Naive thymus-derived CD4-positive, alpha-beta T cell (primary cell): ENCODE measurements at regions of chr5 and their contacts with region 1.

Region 1: GRCh38 chr5:16616536-16617273 is at the start of gene RETREG1:
- DNase-seq: peak; percentile 84 to 92 (median 91)
- ATAC-seq: peak; percentile 93
- H3K4me3 ChIP-seq: peak within 1 kb of the TSS; percentile 79
- H3K4me3 Mint-ChIP-seq: peak within 1 kb of the TSS in 6 of 10 donors; percentile 96 to 99 (median 98)
- H3K27ac ChIP-seq: peak within 1 kb of the TSS; percentile 98
- H3K27ac Mint-ChIP-seq: peak within 1 kb of the TSS in 7 of 9 donors; percentile 92 to 99 (median 99)
- H3K4me1 ChIP-seq: peaks cover 10 to 32% of the 10 kb centered on the region in 2 donors
- H3K4me1 Mint-ChIP-seq: peaks cover 32 to 52% (median 44%) of the 10 kb centered on the region in 7 donors
- H3K27me3 ChIP-seq: no peaks in the 10 kb centered on the region
- H3K27me3 Mint-ChIP-seq: no peaks in the 10 kb centered on the region
- total RNA-seq, gene RETREG1: 37.4 to 78.3 (median 47.4) TPM

Region 2: DNA sequence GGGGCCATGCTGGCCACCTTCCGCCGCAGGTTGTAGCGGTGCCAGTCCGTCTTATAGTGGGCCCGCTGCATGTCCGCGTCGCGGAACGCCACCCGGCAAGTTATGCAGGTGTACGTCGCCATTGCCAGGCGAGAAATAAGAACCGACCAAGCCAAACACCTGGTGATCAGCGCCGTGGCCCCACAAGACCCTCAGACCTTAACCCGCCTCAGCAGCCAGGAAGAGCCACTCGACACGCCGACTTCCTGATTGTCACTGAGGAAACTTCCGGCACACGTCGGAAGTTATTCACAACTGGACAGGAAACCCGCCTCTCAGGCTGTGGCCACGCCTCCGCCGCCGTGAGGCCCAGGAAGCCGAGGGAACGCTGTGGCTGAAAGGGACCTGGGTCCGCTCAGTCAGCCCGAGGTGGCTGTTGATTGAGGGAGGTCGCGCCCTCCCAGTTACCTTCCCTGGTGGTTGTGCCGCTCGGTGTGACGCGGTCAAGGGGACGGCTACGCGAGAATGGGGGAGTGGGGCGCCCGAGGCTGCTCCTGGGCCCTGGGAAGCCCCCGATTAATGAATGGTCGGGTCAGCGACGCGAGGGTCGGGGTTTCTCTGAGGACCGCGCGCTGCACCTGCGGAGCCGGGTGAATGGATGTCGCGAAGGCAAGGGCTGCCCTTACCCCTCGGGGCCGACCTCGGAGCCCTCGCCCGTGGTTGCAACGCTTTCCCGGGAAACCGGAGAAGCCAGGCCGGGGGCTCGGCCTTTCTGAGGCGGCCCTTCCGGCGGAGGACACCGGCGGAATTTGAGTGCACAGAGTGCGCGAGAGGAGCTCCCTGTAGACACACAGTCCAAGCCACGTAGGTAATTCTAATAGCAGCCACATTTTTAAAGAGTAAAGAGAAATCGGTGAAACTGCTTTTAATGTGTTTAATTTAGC is 150.9 kb before region 1 on chr5 and contains the start of gene ZNF622:
- CTCF ChIA-PET with region 1: no interaction called
- POLR2A ChIA-PET with region 1: interaction called, 11 read pairs
- intact Hi-C with region 1: loop called (anchors 1 kb)
- DNase-seq: peak; percentile 72 to 89 (median 86)
- ATAC-seq: peak; percentile 96
- H3K4me3 ChIP-seq: peak within 1 kb of the TSS; percentile 88
- H3K4me3 Mint-ChIP-seq: peak within 1 kb of the TSS; percentile 90 to 100 (median 97)
- H3K27ac ChIP-seq: peak within 1 kb of the TSS; percentile 87
- H3K27ac Mint-ChIP-seq: peak within 1 kb of the TSS; percentile 94 to 99 (median 97)
- H3K4me1 ChIP-seq: peaks cover 44 to 55% of the 10 kb centered on the region in 2 donors
- H3K4me1 Mint-ChIP-seq: peaks cover 61 to 98% (median 82%) of the 10 kb centered on the region in 7 donors
- H3K27me3 ChIP-seq: no peaks in the 10 kb centered on the region
- H3K27me3 Mint-ChIP-seq: no peaks in the 10 kb centered on the region
- total RNA-seq, gene ZNF622: 31.8 to 40.7 (median 36.0) TPM

Region 3: DNA sequence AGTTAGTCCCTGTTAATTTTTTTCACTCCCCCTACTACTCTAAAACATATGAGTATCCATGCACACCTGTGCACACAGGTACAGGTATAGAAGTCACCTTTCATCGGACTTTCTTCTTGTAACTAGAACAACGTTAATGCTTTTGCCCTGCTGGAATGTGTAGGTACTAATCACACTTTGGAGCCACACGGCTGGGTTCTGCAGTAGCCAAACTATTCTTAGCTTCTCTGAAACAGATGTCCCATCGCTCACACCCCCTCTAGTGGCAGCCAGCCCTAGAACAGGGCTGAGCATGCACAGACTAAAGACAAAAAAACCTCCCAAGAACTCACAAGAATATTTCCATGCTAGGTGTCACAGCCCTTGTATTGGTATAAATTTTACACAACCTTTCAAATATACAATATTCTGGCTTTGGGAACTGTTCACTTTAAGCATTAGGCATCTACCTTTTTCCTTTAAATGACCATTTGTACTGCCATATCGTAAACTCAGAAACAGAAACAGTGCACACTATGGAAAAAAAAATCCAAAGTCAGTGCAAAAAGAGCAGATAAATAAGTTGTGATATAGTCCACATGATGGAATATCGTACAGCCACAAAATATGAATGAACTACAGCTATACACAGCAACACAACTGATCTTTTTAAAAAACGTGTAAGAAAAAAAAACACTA is 63.9 kb before region 1 on chr5:
- CTCF ChIA-PET with region 1: no interaction called
- POLR2A ChIA-PET with region 1: interaction called, 3 read pairs
- intact Hi-C with region 1: loop called (anchors 2 to 5 kb)
- DNase-seq: peak in 7 of 9 donors; percentile 34 to 54 (median 44)
- ATAC-seq: peak; percentile 80
- H3K4me3 ChIP-seq: no peak overlapping the region
- H3K4me3 Mint-ChIP-seq: peak overlapping the region in 2 of 10 donors; percentile 4 to 7
- H3K27ac ChIP-seq: no peak overlapping the region
- H3K27ac Mint-ChIP-seq: peak overlapping the region in 5 of 9 donors; percentile 7 to 33 (median 14)
- H3K4me1 ChIP-seq: no peaks in the 10 kb centered on the region
- H3K4me1 Mint-ChIP-seq: peaks cover 19 to 86% (median 71%) of the 10 kb centered on the region in 7 donors
- H3K27me3 ChIP-seq: no peaks in the 10 kb centered on the region
- H3K27me3 Mint-ChIP-seq: no peaks in the 10 kb centered on the region

Region 4: DNA sequence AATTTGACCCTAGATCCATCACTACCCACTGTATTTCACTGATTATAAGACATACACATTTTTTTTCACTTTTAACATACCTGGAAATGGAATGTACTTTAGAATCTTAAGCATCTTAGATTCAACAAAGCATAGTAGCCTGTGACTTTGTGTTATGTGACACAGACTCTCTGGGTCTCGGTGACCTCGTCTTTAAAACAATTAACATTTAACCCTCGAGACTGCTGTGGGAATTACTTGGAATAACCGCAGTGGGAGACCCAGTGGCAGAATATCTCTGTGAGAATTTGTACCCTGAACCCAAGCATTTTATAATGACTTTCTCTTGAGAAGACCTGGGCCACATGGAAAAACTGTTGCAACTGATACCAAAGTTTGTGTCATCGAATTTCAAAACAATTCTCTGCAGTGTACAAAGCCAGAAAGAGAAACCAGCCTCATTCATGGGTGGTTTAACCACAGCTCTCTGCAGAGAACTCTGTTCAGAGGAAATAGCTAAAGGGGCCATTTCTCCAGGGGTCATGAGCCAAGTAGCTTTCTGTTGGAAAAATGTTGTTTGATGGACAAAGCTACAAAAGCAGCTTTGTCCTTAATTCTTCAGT is 10.1 kb after region 1 on chr5:
- CTCF ChIA-PET with region 1: interaction called, 11 read pairs
- POLR2A ChIA-PET with region 1: interaction called, 182 read pairs
- intact Hi-C with region 1: loop called (anchors 1 kb)
- DNase-seq: peak in 7 of 9 donors; percentile 41 to 71 (median 56)
- ATAC-seq: peak; percentile 52
- H3K4me3 ChIP-seq: no peak overlapping the region
- H3K4me3 Mint-ChIP-seq: peak overlapping the region in 9 of 10 donors; percentile 2 to 78 (median 53)
- H3K27ac ChIP-seq: peak overlapping the region; percentile 54
- H3K27ac Mint-ChIP-seq: peak overlapping the region; percentile 23 to 99 (median 86)
- H3K4me1 ChIP-seq: peaks cover 0 to 49% of the 10 kb centered on the region in 2 donors
- H3K4me1 Mint-ChIP-seq: peaks cover 38 to 78% (median 66%) of the 10 kb centered on the region in 7 donors
- H3K27me3 ChIP-seq: no peaks in the 10 kb centered on the region
- H3K27me3 Mint-ChIP-seq: no peaks in the 10 kb centered on the region

Region 5: DNA sequence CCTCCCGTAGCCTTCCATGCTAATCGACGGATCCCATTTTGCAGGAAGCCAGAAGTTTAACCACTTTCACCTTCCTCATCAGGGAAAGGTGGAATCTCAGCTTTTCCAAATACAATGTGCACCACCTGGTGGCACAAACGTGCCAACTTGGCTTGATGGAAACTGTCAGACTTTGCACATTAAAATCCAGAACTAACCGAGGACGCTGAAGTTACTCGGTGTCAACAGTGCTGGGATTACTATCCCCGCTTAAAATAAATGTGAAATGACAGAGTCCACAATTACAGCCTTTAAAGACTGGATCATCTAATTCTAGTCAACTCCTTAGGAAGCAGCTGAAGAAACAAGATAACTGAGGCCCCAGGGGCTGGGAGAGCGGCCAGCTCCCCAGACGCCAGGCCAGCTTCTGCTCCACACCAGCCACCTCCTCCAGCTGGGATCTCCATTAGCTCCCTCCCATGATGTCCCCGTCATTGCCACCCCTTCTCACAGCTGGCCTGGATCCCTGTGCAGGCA is 50.2 kb after region 1 on chr5:
- CTCF ChIA-PET with region 1: interaction called, 6 read pairs
- POLR2A ChIA-PET with region 1: interaction called, 22 read pairs
- intact Hi-C with region 1: loop called (anchors 1 to 2 kb)
- DNase-seq: peak in 5 of 9 donors; percentile 9 to 54 (median 38)
- ATAC-seq: peak; percentile 52
- H3K4me3 ChIP-seq: no peak overlapping the region
- H3K4me3 Mint-ChIP-seq: peak overlapping the region in 4 of 10 donors; percentile 55 to 78 (median 58)
- H3K27ac ChIP-seq: no peak overlapping the region
- H3K27ac Mint-ChIP-seq: peak overlapping the region in 4 of 9 donors; percentile 13 to 84 (median 64)
- H3K4me1 ChIP-seq: no peaks in the 10 kb centered on the region
- H3K4me1 Mint-ChIP-seq: peaks cover 0 to 58% (median 26%) of the 10 kb centered on the region in 7 donors
- H3K27me3 ChIP-seq: no peaks in the 10 kb centered on the region
- H3K27me3 Mint-ChIP-seq: no peaks in the 10 kb centered on the region

Region 6: DNA sequence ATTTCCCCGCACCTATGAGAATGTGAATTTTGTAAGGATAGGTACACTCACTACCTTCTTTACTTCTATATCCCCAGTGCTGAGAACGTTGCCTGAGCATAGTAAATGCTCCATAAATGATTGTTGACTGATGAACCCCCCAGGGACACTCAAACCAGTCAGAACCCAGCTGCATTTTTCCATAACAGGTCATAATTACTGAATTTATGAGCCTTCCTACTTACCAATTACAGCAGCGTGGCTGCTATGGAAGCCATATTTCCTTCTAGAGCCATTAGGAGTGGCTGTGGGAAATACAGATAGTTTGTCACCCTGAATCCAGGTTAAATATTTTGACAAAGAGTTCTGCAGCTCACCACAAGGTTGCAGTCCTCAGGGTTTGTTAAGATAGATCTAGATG is 1152.6 kb after region 1 on chr5:
- CTCF ChIA-PET with region 1: no interaction called
- POLR2A ChIA-PET with region 1: no interaction called
- intact Hi-C with region 1: no loop called
- DNase-seq: no peak
- ATAC-seq: no peak
- H3K4me3 ChIP-seq: no peak overlapping the region
- H3K4me3 Mint-ChIP-seq: no peak overlapping the region
- H3K27ac ChIP-seq: no peak overlapping the region
- H3K27ac Mint-ChIP-seq: no peak overlapping the region
- H3K4me1 ChIP-seq: no peaks in the 10 kb centered on the region
- H3K4me1 Mint-ChIP-seq: no peaks in the 10 kb centered on the region
- H3K27me3 ChIP-seq: no peaks in the 10 kb centered on the region
- H3K27me3 Mint-ChIP-seq: no peaks in the 10 kb centered on the region